ENCODE measurements at regions of chr6 and their contacts with region 1.

Region 1: GRCh38 chr6:31225735-31226134 is 46.2 kb downstream of the HLA-C start:
- DNase-seq: no peak

Region 2: DNA sequence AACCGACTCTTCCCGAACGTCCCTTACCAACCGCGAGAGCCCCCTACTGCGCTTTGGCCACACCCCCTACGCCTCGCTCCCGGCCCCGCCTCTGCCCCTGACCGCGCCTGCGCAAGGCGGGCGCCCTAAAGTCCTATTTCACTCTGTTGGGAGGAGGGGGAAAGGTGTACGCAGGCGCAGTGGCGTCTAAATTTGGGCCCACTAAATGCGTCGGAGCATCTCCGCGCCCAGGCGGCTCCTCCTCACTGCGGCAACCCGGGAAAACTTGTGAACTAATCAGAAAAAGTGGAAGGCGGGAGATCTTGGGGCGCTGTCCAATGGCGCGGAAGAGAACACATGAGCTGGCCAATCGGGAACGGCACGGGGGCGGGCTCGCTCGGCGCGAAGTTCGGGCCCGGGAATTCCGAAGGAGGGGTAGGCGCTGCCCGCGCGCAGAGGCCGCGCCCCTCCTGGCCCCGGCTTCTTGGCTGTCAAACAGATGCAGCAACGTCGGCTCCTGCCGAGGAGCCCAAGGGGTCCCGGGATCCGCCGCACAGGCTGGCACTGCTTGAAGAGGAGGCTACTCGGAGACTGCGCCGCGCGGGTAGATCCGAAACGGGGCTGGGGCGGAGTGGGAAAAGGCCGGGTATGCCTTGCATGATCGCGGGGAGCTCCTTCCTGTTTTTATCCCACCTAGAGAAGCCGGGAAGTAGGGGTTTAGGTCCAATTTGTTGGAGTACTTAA is 67.4 kb before region 1 on chr6 and contains the start of gene TCF19:
- intact Hi-C with region 1: no loop called
- DNase-seq: peak; percentile 100
- total RNA-seq, gene TCF19: 3.0 to 4.8 TPM

Region 3: GRCh38 chr6:31308050-31308844 is 82.5 kb after region 1 on chr6:
- intact Hi-C with region 1: loop called in 1 of 2 experiments (anchors 10 kb)
- DNase-seq: peak; percentile 81

Region 4: DNA sequence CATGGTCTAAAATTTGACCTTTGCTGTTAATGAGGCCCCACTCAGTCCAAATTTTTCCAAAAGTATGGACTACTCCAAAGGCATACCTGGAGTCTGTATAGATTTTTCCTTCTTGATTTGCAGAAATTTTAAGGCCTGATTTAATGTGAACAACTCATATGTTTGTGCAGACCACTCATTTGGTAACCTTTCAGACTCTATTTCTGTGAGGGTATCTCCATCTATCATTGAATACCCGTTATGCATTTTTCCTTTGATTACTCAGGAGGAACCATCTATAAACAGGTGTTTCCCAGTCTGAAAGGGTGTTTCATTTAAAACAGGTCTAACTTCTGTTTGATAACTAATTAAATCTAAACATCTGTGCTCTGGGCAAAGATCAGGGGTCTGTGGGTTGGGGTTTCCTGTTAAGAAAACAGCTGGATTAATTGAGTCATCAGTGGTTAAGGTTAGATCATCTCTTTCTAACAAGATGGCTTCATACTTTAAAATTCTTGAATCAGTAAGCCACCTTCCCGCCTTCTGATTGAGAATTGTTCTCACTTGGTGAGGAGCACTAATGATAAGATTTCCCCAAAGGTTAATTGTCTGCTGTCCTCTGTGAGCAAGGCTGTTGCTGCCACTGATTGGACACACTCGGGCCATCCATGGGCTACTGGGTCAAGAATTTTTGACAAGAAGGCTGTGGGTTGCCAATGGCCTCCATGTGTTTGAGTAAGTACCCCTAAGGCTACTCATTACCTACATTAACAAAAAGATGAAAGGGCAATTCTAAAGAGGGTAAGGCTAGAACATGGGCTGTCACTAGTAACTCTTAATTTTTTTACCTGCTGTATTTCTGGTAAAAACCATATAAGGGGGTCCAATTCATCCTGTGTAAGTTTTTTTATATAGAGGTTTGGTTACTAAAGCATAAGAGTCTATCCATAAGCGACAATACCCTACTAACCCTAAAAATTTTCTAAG is 107.2 kb after region 1 on chr6:
- intact Hi-C with region 1: no loop called
- DNase-seq: no peak